ENCODE measurements at regions of chr6 and their contacts with region 1.

Region 1: GRCh38 chr6:45922728-45923351 is 92.8 kb downstream of the CLIC5 start:
- ATAC-seq: peak; percentile 67 to 90 (median 75)
- H3K4me3 ChIP-seq: no peak overlapping the region
- H3K27ac ChIP-seq: no peak overlapping the region
- H3K4me1 ChIP-seq: peaks cover 8 to 12% of the 10 kb centered on the region in 2 donors

Region 2: DNA sequence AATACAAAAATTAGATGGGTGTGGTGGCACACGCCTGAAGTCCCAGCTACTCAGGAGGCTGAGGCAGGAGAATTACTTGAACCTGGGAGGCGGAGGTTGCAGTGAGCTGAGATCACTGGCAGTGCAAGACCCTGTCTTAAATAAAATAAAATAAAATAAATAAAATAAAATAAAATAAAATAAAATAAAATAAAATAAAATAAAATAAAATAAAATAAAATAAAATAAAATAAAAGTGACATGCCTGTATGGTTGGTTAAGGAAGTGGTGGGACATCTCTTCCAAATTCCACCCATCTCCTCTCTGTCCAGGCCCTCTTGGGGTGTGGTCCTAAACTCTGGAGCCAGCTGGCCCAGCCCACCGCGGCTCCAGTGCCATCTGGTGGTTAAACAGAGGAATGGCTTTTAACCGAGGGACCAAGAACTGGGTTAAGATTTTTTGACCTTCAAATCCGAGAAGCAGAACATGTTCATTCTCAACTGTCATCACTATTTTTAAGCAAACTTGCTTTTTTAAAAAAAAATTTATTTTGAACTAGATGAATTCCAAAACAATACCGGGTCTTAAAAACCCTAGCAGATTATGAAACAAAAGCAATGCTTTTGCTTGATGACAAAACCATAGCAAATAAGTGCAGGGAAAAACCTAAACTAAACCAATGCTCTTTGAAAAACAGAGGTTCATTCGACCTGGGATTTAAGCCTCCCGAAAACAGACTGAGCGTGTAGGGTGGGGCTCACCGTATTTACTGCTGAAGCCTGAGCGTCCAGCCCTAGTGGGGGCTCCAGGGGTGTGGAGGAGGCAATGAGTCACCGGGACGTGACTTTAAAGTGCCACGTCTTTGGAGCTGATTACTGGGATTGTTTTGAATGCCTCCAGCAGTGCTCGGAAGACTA is 1466.5 kb before region 1 on chr6:
- in situ Hi-C with region 1: loop called in 1 of 9 experiments (anchors 25 kb)
- ATAC-seq: peak in 5 of 8 experiments; percentile 35 to 91 (median 88)
- H3K4me3 ChIP-seq: no peak overlapping the region
- H3K27ac ChIP-seq: no peak overlapping the region
- H3K4me1 ChIP-seq: no peaks in the 10 kb centered on the region

Region 3: GRCh38 chr6:44630125-44631028 is 1292.5 kb before region 1 on chr6:
- in situ Hi-C with region 1: loop called in 2 of 9 experiments (anchors 25 kb)
- ATAC-seq: peak; percentile 65 to 96 (median 85)
- H3K4me3 ChIP-seq: no peak overlapping the region
- H3K27ac ChIP-seq: no peak overlapping the region
- H3K4me1 ChIP-seq: peaks cover under 1 to 3% of the 10 kb centered on the region in 2 donors

Region 4: GRCh38 chr6:44655412-44656342 is 1267.2 kb before region 1 on chr6:
- in situ Hi-C with region 1: loop called in 1 of 9 experiments (anchors 25 kb)
- ATAC-seq: peak; percentile 74 to 96 (median 84)
- H3K4me3 ChIP-seq: no peak overlapping the region
- H3K27ac ChIP-seq: no peak overlapping the region
- H3K4me1 ChIP-seq: peaks cover 0 to 13% of the 10 kb centered on the region in 2 donors

Region 5: GRCh38 chr6:45377554-45378333 is 545.1 kb before region 1 on chr6 and contains the start of gene SUPT3H:
- in situ Hi-C with region 1: loop called in 1 of 9 experiments (anchors 25 kb)
- ATAC-seq: peak; percentile 88 to 92 (median 90)
- H3K4me3 ChIP-seq: peak within 1 kb of the TSS; percentile 60 to 76 (median 70)
- H3K27ac ChIP-seq: peak within 1 kb of the TSS; percentile 95 to 97
- H3K4me1 ChIP-seq: peaks cover 6 to 12% of the 10 kb centered on the region in 2 donors
- total RNA-seq, gene SUPT3H: 8.7 to 43.2 (median 20.5) TPM

Region 6: DNA sequence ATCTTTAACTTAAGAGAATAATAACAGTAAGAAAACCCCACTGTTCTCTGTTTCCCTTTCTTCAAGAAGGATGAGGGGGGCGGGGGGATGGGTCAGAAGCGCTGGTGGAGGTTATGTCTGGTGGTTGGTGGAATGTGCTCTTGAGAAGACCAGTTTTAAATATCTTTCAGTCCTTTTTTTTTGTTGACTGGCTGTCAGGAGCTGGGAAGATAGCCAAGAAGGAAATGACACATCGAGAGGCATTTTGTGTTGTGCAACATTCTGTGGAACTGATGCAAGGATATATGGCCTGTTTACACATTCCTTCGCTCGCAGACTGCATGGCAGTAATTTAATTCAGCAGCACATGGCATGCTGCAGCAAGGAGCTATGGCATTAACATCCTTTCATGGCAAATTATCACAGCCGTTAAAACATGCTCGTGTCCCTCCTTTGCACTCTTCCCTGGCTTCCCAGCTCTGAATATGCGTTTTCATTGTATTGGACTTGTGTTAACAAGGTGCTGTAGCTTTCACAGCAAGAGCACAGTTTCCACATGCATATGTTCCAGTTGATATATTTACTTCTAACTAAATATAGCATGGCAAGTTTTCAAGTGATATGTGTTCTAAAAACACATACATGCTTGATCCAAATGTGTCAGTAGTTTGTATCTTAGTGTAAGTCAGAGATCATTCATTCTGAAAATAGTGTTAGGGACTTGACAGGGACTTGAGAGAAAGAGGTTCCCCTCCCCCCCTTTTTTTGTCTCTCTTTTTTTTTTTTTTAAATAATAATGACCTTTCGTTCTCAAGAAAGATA is 476.9 kb before region 1 on chr6:
- in situ Hi-C with region 1: loop called in 1 of 9 experiments (anchors 25 kb)
- ATAC-seq: peak; percentile 97 to 99 (median 99)
- H3K4me3 ChIP-seq: no peak overlapping the region
- H3K27ac ChIP-seq: no peak overlapping the region
- H3K4me1 ChIP-seq: peaks cover 9 to 12% of the 10 kb centered on the region in 2 donors

Region 7: DNA sequence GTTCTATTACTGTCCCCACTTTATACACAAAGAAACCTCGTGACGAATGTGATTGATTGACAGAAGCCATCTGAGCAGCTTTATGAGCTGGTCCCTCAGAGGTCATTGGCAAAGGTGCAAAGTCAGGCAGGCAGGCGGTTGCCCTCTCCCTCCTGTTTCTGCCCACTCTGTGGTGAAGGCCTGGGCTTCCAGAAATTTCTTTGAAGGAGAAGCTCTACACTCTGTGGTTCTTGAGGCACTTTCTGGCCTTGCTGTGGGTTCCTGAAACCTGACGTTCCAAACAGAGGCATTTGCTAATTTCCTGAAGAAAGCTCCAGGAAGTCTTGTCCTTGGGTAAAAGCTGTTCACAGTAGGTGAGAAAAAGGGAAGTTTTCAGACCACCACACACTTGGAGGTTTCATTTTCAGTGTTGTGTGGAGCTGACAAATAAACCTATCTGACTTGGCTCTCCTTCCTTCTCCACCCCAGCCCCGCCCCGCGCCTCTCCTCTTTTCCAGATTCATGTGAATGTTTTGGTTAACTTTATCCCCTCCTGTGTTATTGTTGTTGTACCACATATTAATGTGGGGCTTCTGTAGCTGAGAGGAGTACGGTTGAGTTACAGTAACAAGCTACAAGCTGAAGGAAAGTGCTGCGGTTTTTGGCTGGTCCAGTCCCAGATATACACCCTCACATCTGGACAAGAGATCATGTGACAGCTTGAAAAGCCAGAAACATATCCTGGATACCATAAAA is 181.2 kb before region 1 on chr6:
- in situ Hi-C with region 1: loop called in 1 of 9 experiments (anchors 25 kb)
- ATAC-seq: peak in 2 of 8 experiments; percentile 57 to 93
- H3K4me3 ChIP-seq: no peak overlapping the region
- H3K27ac ChIP-seq: no peak overlapping the region
- H3K4me1 ChIP-seq: no peaks in the 10 kb centered on the region

Measured in motor neuron (in vitro differentiated cells).